ENCODE measurements at regions of chr2 and their contacts with region 1.

Region 1: GRCh38 chr2:174325373-174326160 is 9.2 kb upstream of the SP9 start:
- DNase-seq: no peak
- H3K4me3 ChIP-seq: peak overlapping the region; percentile 55
- H3K4me3 Mint-ChIP-seq: peak overlapping the region; percentile 78
- H3K27ac Mint-ChIP-seq: no peak overlapping the region
- H3K4me1 ChIP-seq: 0 out of 2 replicates have a peak, but pooled peaks cover 2% of the 10 kb centered on the region
- H3K4me1 Mint-ChIP-seq: peaks cover 11% of the 10 kb centered on the region
- H3K27me3 ChIP-seq: no peaks in the 10 kb centered on the region
- H3K27me3 Mint-ChIP-seq: peaks cover 10% of the 10 kb centered on the region
- CTCF ChIP-seq: no peak

Region 2: GRCh38 chr2:173708806-173709205 is 616.8 kb before region 1 on chr2:
- CTCF ChIA-PET with region 1: no interaction called
- POLR2A ChIA-PET with region 1: no interaction called
- intact Hi-C with region 1: no loop called
- DNase-seq: no peak
- H3K4me3 ChIP-seq: no peak overlapping the region
- H3K4me3 Mint-ChIP-seq: no peak overlapping the region
- H3K27ac Mint-ChIP-seq: no peak overlapping the region
- H3K4me1 ChIP-seq: no peaks in the 10 kb centered on the region
- H3K4me1 Mint-ChIP-seq: no peaks in the 10 kb centered on the region
- H3K27me3 ChIP-seq: no peaks in the 10 kb centered on the region
- H3K27me3 Mint-ChIP-seq: no peaks in the 10 kb centered on the region
- CTCF ChIP-seq: no peak

Region 3: GRCh38 chr2:174300089-174300488 is 25.5 kb before region 1 on chr2:
- CTCF ChIA-PET with region 1: no interaction called
- POLR2A ChIA-PET with region 1: no interaction called
- intact Hi-C with region 1: loop called (anchors 2 kb)
- DNase-seq: no peak
- H3K4me3 ChIP-seq: no peak overlapping the region
- H3K4me3 Mint-ChIP-seq: no peak overlapping the region
- H3K27ac Mint-ChIP-seq: no peak overlapping the region
- H3K4me1 ChIP-seq: peaks cover 8% of the 10 kb centered on the region; the same call in 1 of the 2 replicates
- H3K4me1 Mint-ChIP-seq: peaks cover 6% of the 10 kb centered on the region
- H3K27me3 ChIP-seq: no peaks in the 10 kb centered on the region
- H3K27me3 Mint-ChIP-seq: peaks cover 3% of the 10 kb centered on the region
- CTCF ChIP-seq: no peak

Measured in Caco-2 (cell line).